Adrenal gland (tissue), 19 donors: ENCODE measurements at regions of chr11 and their contacts with region 1.

Region 1: GRCh38 chr11:18321980-18322711 is at the starts of genes GTF2H1 and HPS5:
- DNase-seq: peak; percentile 95 to 98 (median 98)
- H3K4me3 ChIP-seq: peak within 1 kb of the TSS; percentile 64 to 89 (median 84)
- H3K27ac ChIP-seq: peak within 1 kb of the TSS; percentile 91 to 99 (median 97)
- H3K4me1 ChIP-seq: peaks cover 30 to 53% of the 10 kb centered on the region in 2 donors
- H3K27me3 ChIP-seq: no peaks in the 10 kb centered on the region
- CTCF ChIP-seq: no peak
- POLR2A ChIP-seq: peak; percentile 90 to 97
- total RNA-seq, gene GTF2H1: 34.5 to 86.4 (median 45.8) TPM
- total RNA-seq, gene HPS5: 12.1 to 49.3 (median 24.0) TPM

Region 2: DNA sequence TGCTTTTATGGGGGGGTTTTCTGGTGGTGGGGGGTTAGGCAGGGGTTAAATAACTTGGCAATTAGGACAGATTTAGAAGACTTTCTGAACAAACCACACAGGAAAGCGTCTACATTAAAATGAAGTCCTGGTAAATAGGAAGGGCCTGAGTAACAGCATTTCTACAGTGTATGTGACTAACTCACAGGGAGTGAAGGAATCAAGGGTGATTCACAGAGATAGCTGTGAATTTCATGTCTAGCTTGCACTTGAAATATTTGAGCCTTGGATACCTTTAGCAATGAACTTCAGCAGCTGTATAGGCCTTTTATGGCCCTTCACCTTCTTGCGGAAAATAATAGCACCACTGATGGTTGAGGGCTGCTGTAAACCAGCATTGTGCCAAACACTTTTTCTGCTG is 46.1 kb after region 1 on chr11:
- intact Hi-C with region 1: no loop called
- DNase-seq: no peak
- H3K4me3 ChIP-seq: no peak overlapping the region
- H3K27ac ChIP-seq: no peak overlapping the region
- H3K4me1 ChIP-seq: no peaks in the 10 kb centered on the region
- H3K27me3 ChIP-seq: no peaks in the 10 kb centered on the region
- CTCF ChIP-seq: no peak
- POLR2A ChIP-seq: no peak

Region 3: DNA sequence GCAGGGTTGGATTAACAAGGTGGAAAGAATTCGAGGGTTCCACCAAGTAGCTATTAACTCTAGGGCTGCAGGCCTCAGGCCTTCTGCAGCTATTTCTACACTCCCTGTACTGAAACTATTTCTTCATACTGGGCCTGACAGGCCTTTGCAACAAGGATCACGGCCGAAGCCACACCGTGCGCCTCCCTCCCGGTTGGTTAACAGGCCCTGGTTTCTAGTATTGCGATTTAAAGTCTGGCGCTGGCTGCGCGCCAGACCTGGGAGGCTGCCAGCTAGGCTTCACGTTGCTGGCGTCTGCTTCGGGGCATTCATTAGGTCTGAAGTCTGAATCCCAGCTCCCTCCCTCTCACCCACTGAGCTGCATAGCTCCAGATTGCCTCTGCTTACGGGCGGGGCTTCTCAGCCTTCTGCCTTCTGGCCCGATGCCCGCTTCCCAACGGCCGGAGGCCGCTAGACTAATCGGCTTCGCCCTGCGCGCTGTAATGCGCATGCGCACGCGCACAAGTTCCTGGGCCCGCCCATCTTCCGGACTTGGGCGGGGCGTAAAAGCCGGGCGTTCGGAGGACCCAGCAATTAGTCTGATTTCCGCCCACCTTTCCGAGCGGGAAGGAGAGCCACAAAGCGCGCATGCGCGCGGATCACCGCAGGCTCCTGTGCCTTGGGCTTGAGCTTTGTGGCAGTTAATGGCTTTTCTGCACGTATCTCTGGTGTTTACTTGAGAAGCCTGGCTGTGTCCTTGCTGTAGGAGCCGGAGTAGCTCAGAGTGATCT is 73.8 kb after region 1 on chr11:
- intact Hi-C with region 1: loop called in 1 of 2 experiments (anchors 10 kb)
- DNase-seq: peak; percentile 98 to 99 (median 99)
- H3K4me3 ChIP-seq: peak overlapping the region; percentile 64 to 86 (median 71)
- H3K27ac ChIP-seq: peak overlapping the region; percentile 86 to 99 (median 94)
- H3K4me1 ChIP-seq: peaks cover 14 to 25% of the 10 kb centered on the region in 2 donors
- H3K27me3 ChIP-seq: no peaks in the 10 kb centered on the region
- CTCF ChIP-seq: peak in 1 of 6 experiments; percentile 4
- POLR2A ChIP-seq: peak; percentile 70 to 96

Region 4: GRCh38 chr11:18526521-18527296 is 204.6 kb after region 1 on chr11 and contains the start of gene TSG101:
- intact Hi-C with region 1: loop called in 1 of 2 experiments (anchors 10 kb)
- DNase-seq: peak; percentile 93 to 97 (median 94)
- H3K4me3 ChIP-seq: peak within 1 kb of the TSS; percentile 37 to 100 (median 77)
- H3K27ac ChIP-seq: peak within 1 kb of the TSS; percentile 77 to 98 (median 95)
- H3K4me1 ChIP-seq: peaks cover 17 to 46% of the 10 kb centered on the region in 2 donors
- H3K27me3 ChIP-seq: no peaks in the 10 kb centered on the region
- CTCF ChIP-seq: peak in 1 of 6 experiments; percentile 0
- POLR2A ChIP-seq: peak; percentile 67 to 82
- total RNA-seq, gene TSG101: 56.4 to 263 (median 74.3) TPM